ENCODE measurements at regions of chr10 and their contacts with region 1.

Region 1: DNA sequence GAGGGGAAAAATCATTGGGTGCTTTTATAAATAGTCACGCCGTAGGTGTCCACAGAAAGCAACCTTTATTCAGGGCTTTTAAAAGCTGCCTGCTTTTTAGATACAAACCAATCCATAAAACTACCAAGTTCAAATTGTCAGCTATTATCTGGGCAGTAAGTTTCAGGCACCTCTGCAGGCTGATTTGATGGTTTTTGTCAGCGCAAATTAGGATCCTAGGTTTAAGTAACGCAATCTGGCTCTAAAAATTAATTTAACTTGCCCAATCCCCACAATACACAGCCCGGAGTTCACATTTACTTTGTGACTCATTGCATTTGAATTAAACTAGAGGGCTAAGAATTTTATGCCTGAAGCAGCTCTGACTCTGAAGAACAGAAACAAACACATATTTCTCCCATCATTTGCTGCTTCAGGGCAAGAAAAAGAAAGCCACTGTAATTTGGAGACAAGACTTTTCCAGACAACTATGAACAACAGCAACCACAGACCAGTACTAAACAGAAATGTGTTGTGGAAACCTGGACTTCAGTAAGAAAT is 43.3 kb downstream of the NRP1 start:
- DNase-seq: peak; percentile 88
- H3K4me3 ChIP-seq: no peak overlapping the region
- H3K27ac ChIP-seq: peak overlapping the region; percentile 99
- H3K4me1 ChIP-seq: peaks cover 24% of the 10 kb centered on the region
- H3K27me3 ChIP-seq: no peaks in the 10 kb centered on the region
- CTCF ChIP-seq: no peak

Region 2: GRCh38 chr10:32877915-32878314 is 413.2 kb before region 1 on chr10:
- CTCF ChIA-PET with region 1: no interaction called
- dilution Hi-C with region 1: no loop called
- in situ Hi-C with region 1: no loop called
- intact Hi-C with region 1: no loop called
- DNase-seq: no peak
- H3K4me3 ChIP-seq: no peak overlapping the region
- H3K27ac ChIP-seq: no peak overlapping the region
- H3K4me1 ChIP-seq: no peaks in the 10 kb centered on the region
- H3K27me3 ChIP-seq: no peaks in the 10 kb centered on the region
- CTCF ChIP-seq: no peak

Region 3: DNA sequence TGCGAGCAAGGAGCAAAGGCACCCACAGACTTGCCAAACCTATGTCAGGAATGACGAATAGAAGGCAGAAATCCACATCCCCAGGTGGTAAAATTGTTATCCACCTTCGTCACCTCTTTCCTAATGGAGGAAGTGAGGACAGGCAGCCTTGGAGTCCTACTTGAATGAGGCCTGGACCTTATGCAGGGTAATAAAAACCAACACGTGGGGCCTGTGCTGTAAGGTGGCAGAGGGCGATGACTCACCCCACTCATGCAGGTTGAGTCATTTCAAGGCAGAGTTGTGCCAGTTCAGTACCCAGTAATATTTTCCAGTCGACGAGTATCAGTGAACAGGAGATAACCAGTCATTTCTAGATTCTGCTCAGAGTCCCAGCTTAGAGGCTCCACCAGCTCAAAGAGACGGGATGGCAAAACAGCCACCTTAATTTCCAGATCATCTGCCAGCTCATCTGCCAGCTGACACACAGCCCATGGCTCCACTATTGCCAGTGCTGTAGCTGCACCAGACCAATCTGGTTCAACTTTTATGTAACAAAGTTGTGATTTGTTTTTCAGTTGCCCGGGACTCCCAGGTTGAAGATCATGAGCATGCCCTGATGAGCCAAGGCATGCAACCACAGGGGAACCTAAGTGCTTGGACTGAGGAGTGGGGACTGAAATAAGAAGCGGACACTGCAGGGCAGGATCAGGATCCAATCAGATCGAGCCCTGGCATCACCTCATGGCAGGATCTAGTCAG is 156.9 kb before region 1 on chr10:
- CTCF ChIA-PET with region 1: no interaction called
- dilution Hi-C with region 1: no loop called
- in situ Hi-C with region 1: no loop called
- intact Hi-C with region 1: no loop called
- DNase-seq: peak; percentile 100
- H3K4me3 ChIP-seq: no peak overlapping the region
- H3K27ac ChIP-seq: peak overlapping the region; percentile 96
- H3K4me1 ChIP-seq: peaks cover 77% of the 10 kb centered on the region
- H3K27me3 ChIP-seq: no peaks in the 10 kb centered on the region
- CTCF ChIP-seq: no peak

Region 4: DNA sequence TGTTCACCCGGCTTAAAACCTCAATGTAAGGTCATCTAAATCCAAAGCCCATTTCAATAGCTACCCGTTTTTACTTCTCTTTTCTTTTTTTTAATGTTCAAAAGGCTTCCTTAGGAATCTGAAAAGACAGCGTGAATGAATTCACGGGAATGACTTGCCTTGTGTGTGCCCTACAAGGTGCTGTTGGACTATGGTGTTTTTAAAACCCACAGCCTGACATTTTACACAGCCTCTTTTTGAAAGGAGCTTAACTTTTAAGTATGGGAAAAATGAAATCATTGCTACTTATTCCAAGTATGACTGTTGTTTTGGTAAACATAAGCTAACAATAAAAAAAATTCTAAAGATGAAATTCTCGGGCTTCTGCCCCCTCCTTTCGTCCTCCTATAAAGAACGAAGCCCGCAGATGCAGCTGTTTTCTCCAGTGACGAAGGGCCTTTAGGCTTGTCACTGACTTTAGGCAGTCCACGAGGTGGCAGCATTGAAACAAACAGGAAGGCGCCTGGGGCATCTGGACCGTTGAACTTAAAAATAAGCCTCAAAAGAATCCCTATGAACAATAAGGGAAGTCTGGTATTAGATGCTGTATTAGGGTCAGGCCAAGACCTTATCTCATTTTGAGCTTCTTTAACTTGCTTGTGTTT is 97.9 kb before region 1 on chr10:
- CTCF ChIA-PET with region 1: no interaction called
- dilution Hi-C with region 1: no loop called
- in situ Hi-C with region 1: no loop called
- intact Hi-C with region 1: loop called (anchors 5 kb)
- DNase-seq: peak; percentile 66
- H3K4me3 ChIP-seq: no peak overlapping the region
- H3K27ac ChIP-seq: no peak overlapping the region
- H3K4me1 ChIP-seq: peaks cover 13% of the 10 kb centered on the region
- H3K27me3 ChIP-seq: no peaks in the 10 kb centered on the region
- CTCF ChIP-seq: peak; percentile 69 to 73

Region 5: GRCh38 chr10:33237736-33238624 is 53.1 kb before region 1 on chr10:
- CTCF ChIA-PET with region 1: no interaction called
- dilution Hi-C with region 1: no loop called
- in situ Hi-C with region 1: no loop called
- intact Hi-C with region 1: loop called (anchors 2 kb)
- DNase-seq: peak; percentile 95
- H3K4me3 ChIP-seq: no peak overlapping the region
- H3K27ac ChIP-seq: peak overlapping the region; percentile 93
- H3K4me1 ChIP-seq: peaks cover 33% of the 10 kb centered on the region
- H3K27me3 ChIP-seq: no peaks in the 10 kb centered on the region
- CTCF ChIP-seq: no peak

Region 6: GRCh38 chr10:33273295-33274002 is 17.7 kb before region 1 on chr10:
- CTCF ChIA-PET with region 1: no interaction called
- dilution Hi-C with region 1: no loop called
- in situ Hi-C with region 1: no loop called
- intact Hi-C with region 1: loop called (anchors 1 kb)
- DNase-seq: peak; percentile 95
- H3K4me3 ChIP-seq: peak overlapping the region; percentile 11 to 16 (median 14)
- H3K27ac ChIP-seq: peak overlapping the region; percentile 97
- H3K4me1 ChIP-seq: peaks cover 39% of the 10 kb centered on the region
- H3K27me3 ChIP-seq: no peaks in the 10 kb centered on the region
- CTCF ChIP-seq: peak; percentile 8 to 53

Measured in mammary epithelial cell (primary cell).